Mammary epithelial cell (primary cell): ENCODE measurements at regions of chr10 and their contacts with region 1.

Region 1: GRCh38 chr10:73997787-73998622 is at the start of gene VCL:
- DNase-seq: peak; percentile 99
- H3K4me3 ChIP-seq: peak within 1 kb of the TSS; percentile 61 to 92 (median 90)
- H3K27ac ChIP-seq: peak within 1 kb of the TSS; percentile 72
- H3K4me1 ChIP-seq: peaks cover 26% of the 10 kb centered on the region
- H3K27me3 ChIP-seq: no peaks in the 10 kb centered on the region
- CTCF ChIP-seq: no peak
- total RNA-seq, gene VCL: 136 to 172 TPM

Region 2: GRCh38 chr10:73946253-73947155 is 51.5 kb before region 1 on chr10:
- CTCF ChIA-PET with region 1: no interaction called
- dilution Hi-C with region 1: loop called (anchors 5 kb)
- in situ Hi-C with region 1: no loop called
- intact Hi-C with region 1: no loop called
- DNase-seq: no peak
- H3K4me3 ChIP-seq: no peak overlapping the region
- H3K27ac ChIP-seq: no peak overlapping the region
- H3K4me1 ChIP-seq: no peaks in the 10 kb centered on the region
- H3K27me3 ChIP-seq: no peaks in the 10 kb centered on the region
- CTCF ChIP-seq: peak in 1 of 2 donors; percentile 34